Activated naive CD4-positive, alpha-beta T cell treated with anti-CD3 and anti-CD28 coated beads for 36 hours (primary cell): ENCODE measurements at regions of chr3 and their contacts with region 1.

Region 1: GRCh38 chr3:171129827-171130226 is 103.3 kb upstream of the SLC2A2 start:
- DNase-seq: no peak
- H3K4me3 Mint-ChIP-seq: no peak overlapping the region
- H3K27ac Mint-ChIP-seq: no peak overlapping the region
- H3K4me1 Mint-ChIP-seq: no peaks in the 10 kb centered on the region
- H3K27me3 Mint-ChIP-seq: no peaks in the 10 kb centered on the region

Region 2: DNA sequence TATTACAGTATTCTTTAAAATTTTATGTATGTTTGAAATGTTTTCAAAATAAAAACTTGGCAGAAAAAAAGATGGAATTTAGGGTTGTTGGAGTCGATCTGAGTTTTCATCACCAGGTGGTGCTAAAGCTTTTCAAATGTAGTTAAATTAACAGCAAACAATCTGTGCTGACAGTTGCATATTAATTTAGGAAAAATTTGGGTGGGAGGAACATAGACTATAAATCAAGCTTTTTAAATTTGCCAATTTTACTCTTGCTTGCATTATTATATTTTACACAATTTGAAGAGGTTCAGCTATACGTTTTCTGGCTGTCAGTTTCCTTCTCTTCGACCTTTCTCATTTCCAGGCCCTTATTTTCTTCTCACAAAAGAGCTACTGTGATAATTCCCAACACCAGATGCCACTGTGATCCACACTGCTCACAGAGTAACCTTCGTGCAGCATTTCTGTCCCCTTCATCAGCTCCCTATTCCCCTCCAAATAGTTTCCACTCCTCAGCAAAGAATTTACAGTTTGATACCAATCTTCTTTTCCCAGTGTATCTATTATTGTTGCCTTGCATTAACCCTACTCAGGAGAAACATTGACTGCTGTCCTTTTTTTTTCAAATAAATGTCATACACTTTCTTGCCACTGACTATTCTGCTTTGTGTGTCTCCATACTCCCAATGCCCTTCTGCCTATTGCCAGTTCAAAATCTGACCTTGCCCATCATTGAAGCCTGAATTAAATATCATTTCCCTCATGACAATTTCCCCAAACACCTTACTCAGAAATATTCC is 168.0 kb before region 1 on chr3:
- CTCF ChIA-PET with region 1: no interaction called
- intact Hi-C with region 1: loop called (anchors 10 kb)
- DNase-seq: peak; percentile 21
- H3K4me3 Mint-ChIP-seq: no peak overlapping the region
- H3K27ac Mint-ChIP-seq: no peak overlapping the region
- H3K4me1 Mint-ChIP-seq: no peaks in the 10 kb centered on the region
- H3K27me3 Mint-ChIP-seq: peaks cover 3% of the 10 kb centered on the region